ENCODE measurements at regions of chr18 and their contacts with region 1.

Region 1: DNA sequence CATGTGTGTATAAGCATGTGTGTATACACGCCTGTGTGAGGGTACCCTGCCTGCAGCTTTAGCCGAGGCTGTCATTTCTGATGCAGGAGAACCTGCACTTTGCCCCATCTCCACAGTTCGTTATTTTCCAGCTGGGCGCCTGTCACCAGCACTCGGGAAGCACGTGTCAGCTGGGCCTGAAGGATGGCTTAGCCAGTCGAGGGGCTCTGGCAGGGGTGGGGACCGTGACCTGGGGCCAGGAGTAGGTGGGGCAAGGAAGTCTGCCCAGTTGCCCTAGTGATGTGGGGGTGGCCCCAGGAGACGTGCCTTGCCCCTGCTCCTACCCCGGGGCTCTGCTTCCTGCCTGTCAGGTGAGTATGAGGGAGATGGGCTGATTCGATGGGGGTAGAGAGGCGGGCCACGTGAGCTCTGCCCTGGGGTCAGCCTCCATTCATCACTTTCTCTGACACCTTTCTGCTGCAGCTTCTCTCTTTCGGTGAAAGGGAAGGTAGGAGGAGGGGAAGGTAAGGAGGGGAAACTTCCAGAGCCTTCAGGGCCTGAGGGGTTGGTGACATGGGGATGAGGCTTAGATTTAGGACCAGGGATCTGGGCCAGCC is 130.6 kb upstream of the SKOR2 start:
- DNase-seq: no peak
- H3K4me3 ChIP-seq: no peak overlapping the region
- H3K4me3 Mint-ChIP-seq: no peak overlapping the region
- H3K27ac ChIP-seq: no peak overlapping the region
- H3K27ac Mint-ChIP-seq: no peak overlapping the region
- H3K4me1 ChIP-seq: no peaks in the 10 kb centered on the region
- H3K4me1 Mint-ChIP-seq: no peaks in the 10 kb centered on the region
- H3K27me3 ChIP-seq: no peaks in the 10 kb centered on the region
- H3K27me3 Mint-ChIP-seq: peaks cover 0 to 2% (median 1%) of the 10 kb centered on the region in 3 donors
- CTCF ChIP-seq: no peak

Region 2: GRCh38 chr18:47036298-47036874 is 345.7 kb before region 1 on chr18:
- intact Hi-C with region 1: no loop called
- DNase-seq: no peak
- H3K4me3 ChIP-seq: no peak overlapping the region
- H3K4me3 Mint-ChIP-seq: no peak overlapping the region
- H3K27ac ChIP-seq: no peak overlapping the region
- H3K27ac Mint-ChIP-seq: no peak overlapping the region
- H3K4me1 ChIP-seq: no peaks in the 10 kb centered on the region
- H3K4me1 Mint-ChIP-seq: no peaks in the 10 kb centered on the region
- H3K27me3 ChIP-seq: no peaks in the 10 kb centered on the region
- H3K27me3 Mint-ChIP-seq: peaks cover 0 to 3% (median 3%) of the 10 kb centered on the region in 3 donors
- CTCF ChIP-seq: no peak

Region 3: GRCh38 chr18:47274961-47275360 is 107.1 kb before region 1 on chr18:
- intact Hi-C with region 1: no loop called
- DNase-seq: no peak
- H3K4me3 ChIP-seq: no peak overlapping the region
- H3K4me3 Mint-ChIP-seq: peak overlapping the region in 1 of 2 donors; percentile 7
- H3K27ac ChIP-seq: no peak overlapping the region
- H3K27ac Mint-ChIP-seq: no peak overlapping the region
- H3K4me1 ChIP-seq: no peaks in the 10 kb centered on the region
- H3K4me1 Mint-ChIP-seq: no peaks in the 10 kb centered on the region
- H3K27me3 ChIP-seq: peaks cover 3 to 5% of the 10 kb centered on the region in 2 donors
- H3K27me3 Mint-ChIP-seq: peaks cover 0 to 10% (median 5%) of the 10 kb centered on the region in 3 donors
- CTCF ChIP-seq: no peak

Region 4: GRCh38 chr18:47323158-47323557 is 58.9 kb before region 1 on chr18:
- intact Hi-C with region 1: loop called in 1 of 2 experiments (anchors 10 kb)
- DNase-seq: no peak
- H3K4me3 ChIP-seq: no peak overlapping the region
- H3K4me3 Mint-ChIP-seq: no peak overlapping the region
- H3K27ac ChIP-seq: no peak overlapping the region
- H3K27ac Mint-ChIP-seq: no peak overlapping the region
- H3K4me1 ChIP-seq: no peaks in the 10 kb centered on the region
- H3K4me1 Mint-ChIP-seq: no peaks in the 10 kb centered on the region
- H3K27me3 ChIP-seq: no peaks in the 10 kb centered on the region
- H3K27me3 Mint-ChIP-seq: peaks cover 0 to 6% (median 4%) of the 10 kb centered on the region in 3 donors
- CTCF ChIP-seq: no peak

Measured in CD14-positive monocyte (primary cell).